Activated CD4-positive, alpha-beta T cell treated with anti-CD3 and anti-CD28 coated beads, Interleukin-2, amount 10 ng/mL, durations not matched to agents 24 days and 14 days (primary cell): ENCODE measurements at regions of chr7 and their contacts with region 1.

Region 1: GRCh38 chr7:131188367-131189339 is 139.0 kb upstream of the MKLN1 start:
- DNase-seq: peak; percentile 89
- H3K4me3 Mint-ChIP-seq: peak overlapping the region; percentile 38
- H3K27ac Mint-ChIP-seq: peak overlapping the region; percentile 90
- H3K4me1 Mint-ChIP-seq: peaks cover 47% of the 10 kb centered on the region
- H3K27me3 Mint-ChIP-seq: no peaks in the 10 kb centered on the region

Region 2: GRCh38 chr7:131052285-131052904 is 136.3 kb before region 1 on chr7:
- intact Hi-C with region 1: no loop called
- DNase-seq: no peak
- H3K4me3 Mint-ChIP-seq: no peak overlapping the region
- H3K27ac Mint-ChIP-seq: no peak overlapping the region
- H3K4me1 Mint-ChIP-seq: peaks cover 57% of the 10 kb centered on the region
- H3K27me3 Mint-ChIP-seq: no peaks in the 10 kb centered on the region

Region 3: GRCh38 chr7:131210618-131211017 is 22.0 kb after region 1 on chr7:
- intact Hi-C with region 1: loop called (anchors 2 kb)
- DNase-seq: no peak
- H3K4me3 Mint-ChIP-seq: no peak overlapping the region
- H3K27ac Mint-ChIP-seq: peak overlapping the region; percentile 76
- H3K4me1 Mint-ChIP-seq: no peaks in the 10 kb centered on the region
- H3K27me3 Mint-ChIP-seq: peaks cover 3% of the 10 kb centered on the region

Region 4: GRCh38 chr7:131370523-131370968 is 181.9 kb after region 1 on chr7:
- intact Hi-C with region 1: loop called (anchors 1 kb)
- DNase-seq: peak; percentile 82
- H3K4me3 Mint-ChIP-seq: no peak overlapping the region
- H3K27ac Mint-ChIP-seq: no peak overlapping the region
- H3K4me1 Mint-ChIP-seq: peaks cover 41% of the 10 kb centered on the region
- H3K27me3 Mint-ChIP-seq: no peaks in the 10 kb centered on the region

Region 5: GRCh38 chr7:131692131-131692960 is 503.7 kb after region 1 on chr7:
- intact Hi-C with region 1: no loop called
- DNase-seq: peak; percentile 83
- H3K4me3 Mint-ChIP-seq: no peak overlapping the region
- H3K27ac Mint-ChIP-seq: no peak overlapping the region
- H3K4me1 Mint-ChIP-seq: peaks cover 3% of the 10 kb centered on the region
- H3K27me3 Mint-ChIP-seq: no peaks in the 10 kb centered on the region